Right ventricle myocardium inferior (tissue), 1 donor: ENCODE measurements at regions of chr4 and their contacts with region 1.

Region 1: DNA sequence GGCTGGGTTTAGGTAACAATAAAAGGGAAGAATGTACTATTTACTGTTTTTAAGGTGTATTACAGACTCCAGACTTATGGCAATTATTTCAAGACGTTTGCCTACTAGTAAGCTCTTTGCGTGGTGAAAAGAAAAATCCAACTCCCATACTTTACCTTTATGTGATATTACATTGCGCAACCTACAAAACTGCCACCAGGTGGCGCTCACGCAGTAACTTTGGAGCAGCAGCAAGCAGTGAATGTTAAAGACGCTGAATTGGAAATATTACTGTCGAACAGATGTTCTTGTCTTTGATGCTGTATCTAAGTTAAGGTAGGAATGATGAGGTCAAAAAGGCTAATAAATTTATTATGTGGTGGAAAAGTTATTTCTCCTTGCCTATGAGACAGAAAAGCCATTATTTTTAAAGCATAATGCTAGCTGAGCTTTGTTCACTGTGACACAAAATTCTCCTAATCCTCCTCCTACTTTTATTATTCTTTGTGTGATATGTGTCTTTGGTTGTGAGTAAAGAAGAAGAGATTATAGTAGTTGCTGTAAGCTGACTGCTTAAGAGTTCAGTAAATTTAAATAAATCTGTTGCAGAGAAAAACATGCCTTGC is 1099.8 kb upstream of the TENM3 start:
- DNase-seq: no peak
- ATAC-seq: no peak

Region 2: DNA sequence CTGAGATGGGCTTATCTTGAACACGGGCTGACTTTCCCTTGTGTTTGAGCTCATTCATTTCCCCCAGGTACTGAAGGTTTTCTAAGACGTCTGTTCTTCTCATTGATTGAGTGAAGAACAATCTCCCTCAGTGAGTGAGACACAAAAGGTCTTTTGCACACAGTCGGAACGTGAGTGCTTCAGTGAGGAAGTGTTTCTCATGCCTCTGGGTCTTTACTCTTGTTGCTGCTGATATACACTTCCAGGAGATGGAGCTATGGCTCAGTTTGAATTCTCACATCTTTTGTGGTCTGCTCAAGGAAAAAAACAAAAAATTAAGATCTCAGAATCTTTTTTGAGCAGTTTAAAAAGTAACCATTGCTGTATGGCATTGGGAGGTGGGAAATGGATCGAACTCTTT is 117.9 kb after region 1 on chr4:
- intact Hi-C with region 1: loop called (anchors 5 kb)
- DNase-seq: no peak
- ATAC-seq: no peak